ENCODE measurements at regions of chr4 and their contacts with region 1.

Region 1: GRCh38 chr4:121192480-121192879 is 28.4 kb upstream of the TNIP3 start:
- DNase-seq: peak; percentile 15
- H3K4me3 ChIP-seq: no peak overlapping the region
- H3K27ac ChIP-seq: no peak overlapping the region
- H3K4me1 ChIP-seq: no peaks in the 10 kb centered on the region
- H3K27me3 ChIP-seq: peaks cover 6% of the 10 kb centered on the region; the same call in 1 of the 2 replicates
- CTCF ChIP-seq: peak; percentile 89
- EP300 ChIP-seq: no peak
- RAD21 ChIP-seq: peak; percentile 83

Region 2: DNA sequence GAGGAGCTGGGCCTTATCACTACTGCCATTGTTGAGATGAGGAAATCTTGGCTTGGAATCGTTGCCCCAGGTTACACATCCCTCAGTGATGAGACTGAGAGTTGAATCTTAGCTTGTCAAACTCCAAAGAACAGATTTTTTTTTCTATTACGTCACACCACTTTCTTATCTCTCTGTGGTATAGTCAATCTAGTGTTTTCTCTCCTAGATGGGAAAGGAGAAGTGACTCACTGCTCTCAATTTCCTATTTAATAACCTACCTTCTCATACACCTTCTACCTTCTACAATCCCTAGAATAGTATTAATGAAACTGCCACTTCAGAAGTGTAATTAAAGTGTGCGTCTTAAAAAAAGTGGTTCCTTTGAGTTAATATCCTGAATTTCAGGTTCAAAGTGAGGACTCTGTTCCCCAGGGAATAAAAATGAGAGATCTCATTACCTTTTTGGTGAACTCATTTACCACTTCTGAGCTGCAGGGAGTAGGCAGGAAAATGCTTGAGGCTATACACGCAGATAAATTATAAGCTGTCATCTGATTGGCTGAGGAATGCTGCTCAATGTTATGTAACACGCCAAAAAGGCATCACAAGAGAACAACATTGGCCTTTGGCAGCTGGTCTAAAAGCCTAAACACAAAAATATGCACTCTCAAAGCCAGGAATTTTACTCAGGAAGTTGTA is 1185.1 kb before region 1 on chr4:
- CTCF ChIA-PET with region 1: no interaction called
- POLR2A ChIA-PET with region 1: no interaction called
- DNase-seq: no peak
- H3K4me3 ChIP-seq: no peak overlapping the region
- H3K27ac ChIP-seq: no peak overlapping the region
- H3K4me1 ChIP-seq: no peaks in the 10 kb centered on the region; a peak in 1 of 4 replicates
- H3K27me3 ChIP-seq: no peaks in the 10 kb centered on the region
- CTCF ChIP-seq: no peak
- EP300 ChIP-seq: no peak
- RAD21 ChIP-seq: no peak

Region 3: GRCh38 chr4:120870279-120870673 is 322.2 kb before region 1 on chr4:
- CTCF ChIA-PET with region 1: no interaction called
- POLR2A ChIA-PET with region 1: no interaction called
- DNase-seq: peak; percentile 3
- H3K4me3 ChIP-seq: no peak overlapping the region
- H3K27ac ChIP-seq: no peak overlapping the region
- H3K4me1 ChIP-seq: peaks cover 0 to 5% of the 10 kb centered on the region in 2 experiments; a peak in 1 of 4 replicates
- H3K27me3 ChIP-seq: no peaks in the 10 kb centered on the region
- CTCF ChIP-seq: no peak
- EP300 ChIP-seq: no peak
- RAD21 ChIP-seq: peak; percentile 3; the same call in 1 of the 2 replicates

Region 4: DNA sequence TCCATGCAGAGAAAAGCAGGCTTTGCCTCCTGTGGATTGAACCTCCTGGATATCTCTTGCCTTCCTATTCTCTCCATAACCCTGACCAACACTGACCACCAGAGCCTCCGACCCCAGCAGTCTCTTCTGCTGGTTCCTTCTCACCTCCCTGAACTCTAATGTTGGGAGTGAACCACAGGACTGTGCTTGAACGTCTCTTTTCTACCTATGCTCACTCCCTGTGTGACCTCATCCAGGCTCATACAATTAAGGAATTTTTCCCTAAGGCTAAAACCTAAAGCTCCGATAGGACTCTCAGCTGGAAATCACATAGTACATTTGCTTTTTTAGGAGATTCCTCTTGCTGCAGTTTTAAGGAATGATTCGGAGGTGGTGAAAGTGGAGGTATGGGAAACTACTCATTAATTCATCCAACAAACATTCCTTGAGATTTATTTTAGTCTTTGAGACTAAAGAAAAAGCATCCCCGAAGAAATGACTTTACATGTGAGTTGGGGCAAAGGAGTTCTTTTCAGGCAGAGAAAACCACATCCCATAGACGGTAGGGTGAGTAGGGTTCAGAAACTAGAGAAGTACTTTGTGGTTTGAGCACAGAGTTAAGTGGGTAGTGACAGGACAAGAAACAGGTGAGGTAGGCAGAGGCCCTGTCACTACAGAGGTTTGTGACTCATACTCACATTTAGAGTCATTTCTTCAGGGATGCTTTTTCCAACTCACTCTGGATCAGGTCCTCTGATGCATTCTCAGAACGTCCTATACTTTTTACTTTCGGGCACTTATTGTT is 151.0 kb before region 1 on chr4:
- CTCF ChIA-PET with region 1: no interaction called
- POLR2A ChIA-PET with region 1: no interaction called
- DNase-seq: no peak
- H3K4me3 ChIP-seq: no peak overlapping the region
- H3K27ac ChIP-seq: no peak overlapping the region
- H3K4me1 ChIP-seq: no peaks in the 10 kb centered on the region
- H3K27me3 ChIP-seq: no peaks in the 10 kb centered on the region
- CTCF ChIP-seq: no peak
- EP300 ChIP-seq: no peak
- RAD21 ChIP-seq: no peak

Region 5: GRCh38 chr4:121168446-121169281 is 23.8 kb before region 1 on chr4:
- CTCF ChIA-PET with region 1: interaction called, 13 read pairs
- POLR2A ChIA-PET with region 1: no interaction called
- DNase-seq: no peak
- H3K4me3 ChIP-seq: no peak overlapping the region
- H3K27ac ChIP-seq: no peak overlapping the region
- H3K4me1 ChIP-seq: no peaks in the 10 kb centered on the region
- H3K27me3 ChIP-seq: peaks cover 4% of the 10 kb centered on the region; the same call in 1 of the 2 replicates
- CTCF ChIP-seq: no peak
- EP300 ChIP-seq: no peak
- RAD21 ChIP-seq: no peak

Region 6: GRCh38 chr4:121209171-121209570 is 16.7 kb after region 1 on chr4:
- CTCF ChIA-PET with region 1: interaction called, 15 read pairs
- POLR2A ChIA-PET with region 1: no interaction called
- DNase-seq: no peak
- H3K4me3 ChIP-seq: no peak overlapping the region
- H3K27ac ChIP-seq: no peak overlapping the region
- H3K4me1 ChIP-seq: no peaks in the 10 kb centered on the region
- H3K27me3 ChIP-seq: no peaks in the 10 kb centered on the region; the same call in 1 of the 2 replicates
- CTCF ChIP-seq: no peak
- EP300 ChIP-seq: no peak
- RAD21 ChIP-seq: no peak

Region 7: GRCh38 chr4:121243485-121243884 is 51.0 kb after region 1 on chr4:
- CTCF ChIA-PET with region 1: interaction called, 45 read pairs
- POLR2A ChIA-PET with region 1: interaction called, 4 read pairs
- DNase-seq: no peak
- H3K4me3 ChIP-seq: no peak overlapping the region; a peak in 1 of 4 replicates
- H3K27ac ChIP-seq: no peak overlapping the region
- H3K4me1 ChIP-seq: no peaks in the 10 kb centered on the region
- H3K27me3 ChIP-seq: no peaks in the 10 kb centered on the region; the same call in 1 of the 2 replicates
- CTCF ChIP-seq: no peak
- EP300 ChIP-seq: no peak
- RAD21 ChIP-seq: no peak